ENCODE measurements at regions of chr7 and their contacts with region 1.

Region 1: DNA sequence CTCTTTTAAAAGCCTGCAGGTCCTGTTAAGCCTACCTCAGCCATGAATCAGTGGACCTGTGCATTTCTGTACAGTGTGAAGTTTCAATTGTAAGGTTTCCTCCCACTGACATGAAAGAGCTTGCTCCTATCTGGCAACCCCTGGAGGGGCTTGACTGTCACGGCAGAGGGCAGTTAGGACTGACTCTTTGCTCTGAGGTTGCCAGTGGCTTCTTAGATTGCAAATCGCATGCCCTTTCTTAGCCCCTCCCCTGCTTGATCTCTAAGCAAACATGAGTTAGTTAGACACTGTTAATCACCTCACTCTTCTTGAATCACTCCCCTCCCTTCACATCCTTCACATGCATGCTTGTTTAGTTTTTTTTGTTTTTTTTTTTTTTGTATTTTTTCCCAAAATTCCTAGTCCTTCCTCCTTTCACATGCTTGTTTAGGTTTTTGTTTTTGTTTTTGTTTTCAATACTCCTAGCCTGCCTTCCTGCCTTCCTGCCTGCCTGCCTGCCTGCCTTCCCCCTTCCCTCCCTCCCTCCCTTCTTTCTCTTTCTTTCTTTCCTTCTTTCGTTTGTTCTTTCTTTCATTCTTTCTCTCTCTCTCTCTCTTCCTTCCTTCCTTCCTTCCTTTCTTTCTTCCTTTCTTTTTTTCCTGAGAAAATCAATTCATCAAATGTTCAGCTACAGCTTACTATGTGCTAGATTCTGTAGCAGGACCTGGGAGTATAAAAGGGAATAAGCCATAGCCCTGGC is 6.0 kb upstream of the HIPK2 start:
- DNase-seq: no peak
- ATAC-seq: peak; percentile 72
- H3K4me3 ChIP-seq: no peak overlapping the region
- H3K27ac ChIP-seq: no peak overlapping the region
- H3K4me1 ChIP-seq: no peaks in the 10 kb centered on the region
- H3K27me3 ChIP-seq: peaks cover 0 to 6% of the 10 kb centered on the region in 2 experiments; a peak in 2 of 4 replicates
- CTCF ChIP-seq: no peak
- EP300 ChIP-seq: no peak
- POLR2A ChIP-seq: no peak
- RAD21 ChIP-seq: no peak

Region 2: GRCh38 chr7:139982927-139983920 is 199.4 kb after region 1 on chr7:
- CTCF ChIA-PET with region 1: no interaction called
- POLR2A ChIA-PET with region 1: no interaction called
- RAD21 ChIA-PET with region 1: no interaction called
- SMC1A ChIA-PET with region 1: no interaction called
- in situ Hi-C with region 1: no loop called
- intact Hi-C with region 1: loop called (anchors 5 kb)
- DNase-seq: no peak
- ATAC-seq: no peak
- H3K4me3 ChIP-seq: no peak overlapping the region
- H3K27ac ChIP-seq: no peak overlapping the region
- H3K4me1 ChIP-seq: no peaks in the 10 kb centered on the region
- H3K27me3 ChIP-seq: no peaks in the 10 kb centered on the region
- CTCF ChIP-seq: no peak
- EP300 ChIP-seq: no peak
- POLR2A ChIP-seq: no peak
- RAD21 ChIP-seq: no peak